HEK293T (cell line): ENCODE measurements at regions of chr1 and their contacts with region 1.

Region 1: DNA sequence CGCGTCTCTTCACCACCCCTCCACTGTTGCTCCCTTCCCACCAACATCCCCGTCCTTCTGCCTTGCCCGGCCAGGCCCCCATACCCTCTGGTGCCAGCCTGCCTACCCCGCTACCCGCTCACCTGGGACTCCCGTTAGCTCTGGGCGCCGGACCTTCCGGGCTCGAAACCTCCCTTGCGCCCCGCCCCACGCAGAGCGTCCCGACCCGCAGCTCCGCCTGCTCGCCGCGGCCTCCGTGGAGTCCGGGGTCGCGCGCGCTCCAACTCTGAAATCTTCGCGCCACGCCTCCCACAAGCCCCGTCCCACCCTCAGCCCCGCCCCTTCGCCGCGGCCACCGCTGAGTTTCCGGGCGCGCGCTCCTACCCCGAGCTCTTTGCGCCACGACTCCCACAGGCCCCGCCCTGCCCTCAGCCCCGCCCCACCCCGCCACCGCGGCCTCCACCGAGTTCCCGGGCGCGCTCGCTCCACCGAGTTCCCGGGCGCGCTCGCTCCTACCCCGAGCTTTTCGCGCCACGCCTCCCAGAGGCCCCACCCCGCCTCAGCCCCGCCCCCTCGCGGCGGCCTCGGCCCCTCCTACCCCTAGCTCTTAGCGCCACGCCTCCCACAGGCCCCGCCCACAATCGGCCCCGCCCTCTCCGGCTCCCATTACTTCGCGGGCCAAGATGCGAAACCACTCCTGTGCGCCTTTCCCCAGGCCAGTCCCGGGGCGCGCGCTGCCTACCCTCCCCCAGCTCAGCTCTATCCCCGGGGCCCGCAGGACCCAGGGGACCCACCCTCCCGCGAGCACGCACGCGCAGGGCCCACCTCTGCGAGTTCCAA is at the start of gene IFT25:
- DNase-seq: peak; percentile 95

Region 2: GRCh38 chr1:53860967-53861411 is 84.7 kb before region 1 on chr1:
- CTCF ChIA-PET with region 1: interaction called, 20 read pairs
- POLR2A ChIA-PET with region 1: interaction called, 3 read pairs
- DNase-seq: peak; percentile 69

Region 3: GRCh38 chr1:53878492-53879105 is 67.0 kb before region 1 on chr1:
- CTCF ChIA-PET with region 1: interaction called, 15 read pairs
- POLR2A ChIA-PET with region 1: interaction called, 5 read pairs
- DNase-seq: peak; percentile 43

Region 4: DNA sequence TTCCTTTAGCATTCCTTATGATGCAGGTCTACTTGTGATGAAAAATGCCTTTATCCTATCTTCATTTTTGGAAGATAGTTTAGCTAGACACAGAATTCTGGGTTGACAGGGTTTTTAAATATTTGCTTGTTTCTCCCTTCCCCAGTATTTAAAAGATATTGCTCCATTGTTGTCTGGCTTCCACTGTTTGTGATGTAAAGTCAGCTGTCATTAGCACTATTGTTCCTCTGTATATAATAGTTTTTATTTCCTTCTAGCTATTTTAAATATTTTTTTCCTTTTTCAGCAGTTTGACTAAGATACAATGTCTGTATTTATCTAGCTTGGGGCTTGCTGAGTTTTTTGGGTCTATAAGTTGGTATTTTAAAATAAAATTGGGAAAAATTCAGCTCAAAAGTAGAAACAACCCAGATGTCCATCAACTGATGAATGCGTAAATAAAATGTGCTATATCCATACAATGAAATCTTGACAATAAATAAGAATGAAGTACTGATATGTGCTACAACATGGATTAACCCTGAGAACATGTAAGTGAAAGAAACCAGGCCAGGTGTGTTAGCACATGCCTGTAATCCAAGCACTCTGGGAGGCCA is 11.4 kb before region 1 on chr1:
- CTCF ChIA-PET with region 1: no interaction called
- POLR2A ChIA-PET with region 1: no interaction called
- DNase-seq: no peak

Region 5: GRCh38 chr1:54151013-54151412 is 205.4 kb after region 1 on chr1:
- CTCF ChIA-PET with region 1: no interaction called
- POLR2A ChIA-PET with region 1: no interaction called
- DNase-seq: no peak